PC-3 (cell line): ENCODE measurements at regions of chr4 and their contacts with region 1.

Region 1: DNA sequence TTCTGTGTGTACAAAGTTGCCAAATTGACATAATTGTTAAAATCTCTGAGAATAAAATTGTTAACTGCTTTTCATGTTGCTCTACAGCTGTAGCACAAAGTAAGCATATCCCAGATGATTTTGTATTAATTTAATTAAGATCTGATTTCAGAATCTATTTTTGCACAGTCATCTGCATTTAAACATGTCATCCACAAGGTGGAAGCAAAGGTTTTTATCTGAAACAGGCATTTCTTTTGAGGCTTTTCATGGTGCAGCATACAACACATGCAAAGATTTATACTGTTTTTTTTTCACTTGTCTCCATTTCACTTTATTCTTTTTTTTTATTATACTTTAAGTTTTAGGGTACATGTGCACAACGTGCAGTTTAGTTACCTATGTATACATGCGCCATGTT is 51.2 kb downstream of the GC start:
- DNase-seq: peak; percentile 73
- ATAC-seq: peak; percentile 38; the same call in 1 of the 2 replicates
- H3K4me3 ChIP-seq: no peak overlapping the region
- H3K27ac ChIP-seq: no peak overlapping the region
- H3K4me1 ChIP-seq: no peaks in the 10 kb centered on the region
- H3K27me3 ChIP-seq: no peaks in the 10 kb centered on the region
- CTCF ChIP-seq: peak; percentile 77

Region 2: GRCh38 chr4:71941001-71941400 is 208.3 kb after region 1 on chr4:
- CTCF ChIA-PET with region 1: no interaction called
- POLR2A ChIA-PET with region 1: no interaction called
- intact Hi-C with region 1: loop called (anchors 1 kb)
- DNase-seq: peak; percentile 64
- ATAC-seq: peak; percentile 38; the same call in 1 of the 2 replicates
- H3K4me3 ChIP-seq: no peak overlapping the region
- H3K27ac ChIP-seq: no peak overlapping the region
- H3K4me1 ChIP-seq: 0 out of 2 replicates have a peak, but pooled peaks cover 5% of the 10 kb centered on the region
- H3K27me3 ChIP-seq: no peaks in the 10 kb centered on the region
- CTCF ChIP-seq: peak; percentile 85

Region 3: GRCh38 chr4:72286185-72286584 is 553.5 kb after region 1 on chr4:
- CTCF ChIA-PET with region 1: no interaction called
- POLR2A ChIA-PET with region 1: interaction called, 6 read pairs
- intact Hi-C with region 1: loop called (anchors 1 kb)
- DNase-seq: peak; percentile 70
- ATAC-seq: peak; percentile 45; the same call in 1 of the 2 replicates
- H3K4me3 ChIP-seq: no peak overlapping the region
- H3K27ac ChIP-seq: no peak overlapping the region
- H3K4me1 ChIP-seq: no peaks in the 10 kb centered on the region
- H3K27me3 ChIP-seq: no peaks in the 10 kb centered on the region
- CTCF ChIP-seq: peak; percentile 68

Region 4: GRCh38 chr4:72496112-72496511 is 763.4 kb after region 1 on chr4:
- CTCF ChIA-PET with region 1: no interaction called
- POLR2A ChIA-PET with region 1: no interaction called
- intact Hi-C with region 1: loop called (anchors 10 kb)
- DNase-seq: peak; percentile 71
- ATAC-seq: peak; percentile 87
- H3K4me3 ChIP-seq: no peak overlapping the region
- H3K27ac ChIP-seq: no peak overlapping the region
- H3K4me1 ChIP-seq: no peaks in the 10 kb centered on the region
- H3K27me3 ChIP-seq: no peaks in the 10 kb centered on the region
- CTCF ChIP-seq: peak; percentile 79